ENCODE measurements at regions of chr11 and their contacts with region 1.

Region 1: DNA sequence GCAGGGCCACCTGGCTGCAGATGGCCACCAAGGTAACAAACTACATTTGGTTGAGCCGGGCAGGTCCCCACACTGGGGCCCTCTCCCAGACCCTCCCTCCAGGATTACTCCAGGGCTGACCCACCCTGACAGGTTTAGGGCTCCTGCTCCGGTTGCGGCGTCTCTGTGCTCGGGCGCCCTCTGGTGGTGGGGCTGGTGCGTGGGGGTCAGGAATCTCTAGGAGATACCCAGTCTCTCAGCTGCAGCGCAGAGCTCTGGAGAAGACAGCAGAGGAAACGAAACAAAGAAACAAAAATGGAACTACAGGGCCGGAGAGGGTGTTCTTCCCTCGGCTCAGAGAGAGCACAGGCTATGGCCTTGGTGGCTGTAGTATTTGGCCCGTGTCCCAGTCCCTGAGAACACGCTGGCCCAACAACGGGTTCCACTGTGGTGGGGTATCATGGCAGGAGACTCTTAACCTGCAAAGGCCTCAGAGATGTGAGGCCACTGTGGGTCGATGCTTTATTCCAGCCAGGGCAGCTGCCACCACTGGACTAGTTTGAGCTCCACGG is 2.4 kb downstream of the C11orf96 start:
- DNase-seq: peak; percentile 71 to 90 (median 75)
- ATAC-seq: peak; percentile 25 to 69 (median 31)
- H3K4me3 ChIP-seq: peak overlapping the region; percentile 62 to 90 (median 70)
- H3K27ac ChIP-seq: peak overlapping the region; percentile 85 to 92 (median 90)
- H3K4me1 ChIP-seq: peaks cover 0 to 41% (median 18%) of the 10 kb centered on the region in 12 donors
- H3K27me3 ChIP-seq: peaks cover 0 to 33% (median 0%) of the 10 kb centered on the region in 9 donors
- CTCF ChIP-seq: peak; percentile 71 to 88 (median 82)
- POLR2A ChIP-seq: no peak

Region 2: GRCh38 chr11:43895601-43896000 is 49.2 kb before region 1 on chr11:
- intact Hi-C with region 1: loop called in 8 of 10 experiments (anchors 1 to 10 kb)
- DNase-seq: no peak
- ATAC-seq: no peak
- H3K4me3 ChIP-seq: no peak overlapping the region
- H3K27ac ChIP-seq: no peak overlapping the region
- H3K4me1 ChIP-seq: no peaks in the 10 kb centered on the region
- H3K27me3 ChIP-seq: no peaks in the 10 kb centered on the region
- CTCF ChIP-seq: no peak
- POLR2A ChIP-seq: no peak

Region 3: GRCh38 chr11:43905813-43906241 is 39.0 kb before region 1 on chr11:
- intact Hi-C with region 1: loop called in 3 of 10 experiments (anchors 5 kb)
- DNase-seq: peak in 4 of 5 donors; percentile 38 to 71 (median 54)
- ATAC-seq: peak in 2 of 4 donors; percentile 55 to 61
- H3K4me3 ChIP-seq: no peak overlapping the region
- H3K27ac ChIP-seq: peak overlapping the region in 10 of 12 donors; percentile 43 to 68 (median 58)
- H3K4me1 ChIP-seq: peaks cover 0 to 30% (median 17%) of the 10 kb centered on the region in 12 donors
- H3K27me3 ChIP-seq: no peaks in the 10 kb centered on the region
- CTCF ChIP-seq: no peak
- POLR2A ChIP-seq: no peak

Region 4: DNA sequence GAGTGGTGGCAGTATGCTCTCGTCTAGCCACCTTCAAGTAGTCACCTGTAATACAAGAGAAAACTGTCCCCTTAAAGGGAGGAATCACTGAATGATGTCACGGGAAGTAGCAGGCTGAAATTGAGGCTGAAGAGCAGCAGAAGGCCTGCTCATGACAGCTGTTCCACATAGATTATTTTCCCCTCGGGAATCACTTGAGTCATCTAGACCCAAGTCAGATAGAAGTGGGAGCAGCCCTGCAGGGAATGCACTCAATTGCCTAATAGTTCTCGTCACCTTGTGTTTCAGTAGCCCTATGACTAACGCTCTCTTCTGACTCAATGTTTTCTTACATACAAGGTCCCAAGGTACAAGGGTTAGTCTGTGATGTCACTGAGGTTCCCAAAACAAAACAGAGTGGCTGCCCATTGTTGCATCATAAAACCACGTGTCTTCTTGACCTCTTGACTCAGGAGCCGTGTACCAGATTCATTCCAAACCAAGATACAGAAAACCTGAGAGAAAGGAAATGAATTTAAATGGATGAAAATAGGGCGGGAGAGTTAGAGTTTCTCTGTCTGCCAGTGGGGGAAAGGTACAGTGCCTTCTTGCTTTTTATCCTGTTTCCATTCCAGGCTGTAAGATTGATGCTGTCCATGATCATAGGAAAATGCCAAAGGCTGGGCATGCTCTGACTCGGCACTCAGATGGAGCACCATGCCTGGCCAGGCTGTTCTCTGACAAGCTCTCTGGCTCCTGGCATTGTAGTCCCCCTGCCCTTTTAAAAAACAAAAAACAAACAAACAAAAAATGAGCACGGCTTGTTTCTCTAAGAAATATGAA is 24.0 kb before region 1 on chr11:
- intact Hi-C with region 1: loop called in 1 of 10 experiments (anchors 2 kb)
- DNase-seq: peak in 4 of 5 donors; percentile 45 to 76 (median 64)
- ATAC-seq: peak; percentile 79 to 91 (median 82)
- H3K4me3 ChIP-seq: no peak overlapping the region
- H3K27ac ChIP-seq: peak overlapping the region; percentile 19 to 88 (median 74)
- H3K4me1 ChIP-seq: peaks cover 3 to 77% (median 32%) of the 10 kb centered on the region in 12 donors
- H3K27me3 ChIP-seq: no peaks in the 10 kb centered on the region
- CTCF ChIP-seq: no peak
- POLR2A ChIP-seq: no peak

Region 5: GRCh38 chr11:43955381-43956118 is 10.7 kb after region 1 on chr11:
- intact Hi-C with region 1: no loop called
- DNase-seq: no peak
- ATAC-seq: peak in 1 of 4 donors; percentile 41
- H3K4me3 ChIP-seq: no peak overlapping the region
- H3K27ac ChIP-seq: no peak overlapping the region
- H3K4me1 ChIP-seq: peaks cover 0 to 5% (median 0%) of the 10 kb centered on the region in 12 donors
- H3K27me3 ChIP-seq: no peaks in the 10 kb centered on the region
- CTCF ChIP-seq: no peak
- POLR2A ChIP-seq: no peak

Region 6: DNA sequence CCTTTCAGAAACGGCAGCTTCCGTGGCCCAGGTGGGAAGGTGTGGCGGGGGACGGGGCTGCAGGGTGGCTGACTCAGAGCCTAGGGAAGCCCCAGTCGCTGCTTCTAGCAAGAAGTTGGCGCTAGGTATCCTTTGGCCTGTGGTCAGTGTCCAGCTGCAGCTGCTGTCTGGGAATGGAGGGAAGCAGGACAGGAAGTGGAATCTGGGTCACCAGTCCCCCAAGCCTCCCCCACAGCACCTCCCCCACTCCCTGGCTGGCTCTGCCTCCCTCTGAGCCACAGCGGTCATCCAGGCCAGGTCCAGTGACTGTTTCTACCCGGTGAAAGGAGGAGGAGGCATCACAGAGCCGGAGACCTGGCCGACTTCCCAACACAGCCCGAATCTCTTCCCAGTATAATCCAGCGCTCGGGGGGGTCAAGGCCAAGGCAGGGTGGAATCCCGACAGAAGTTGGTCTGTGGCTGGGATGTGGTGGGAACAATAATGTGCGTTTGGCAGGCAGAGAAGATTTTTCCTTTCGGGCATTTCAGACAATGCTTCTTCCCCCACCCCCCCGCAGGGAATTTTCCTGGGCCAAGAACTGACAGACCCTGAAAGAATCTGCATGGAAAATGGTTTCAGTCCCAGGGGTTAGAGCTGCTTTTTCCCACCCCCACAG is 42.7 kb after region 1 on chr11:
- intact Hi-C with region 1: loop called in 8 of 10 experiments (anchors 2 to 5 kb)
- DNase-seq: peak; percentile 91 to 97 (median 94)
- ATAC-seq: peak; percentile 86 to 91 (median 90)
- H3K4me3 ChIP-seq: peak overlapping the region in 2 of 12 donors; percentile 2 to 16
- H3K27ac ChIP-seq: peak overlapping the region; percentile 46 to 91 (median 80)
- H3K4me1 ChIP-seq: peaks cover 15 to 72% (median 56%) of the 10 kb centered on the region in 12 donors
- H3K27me3 ChIP-seq: no peaks in the 10 kb centered on the region
- CTCF ChIP-seq: no peak
- POLR2A ChIP-seq: no peak

Region 7: GRCh38 chr11:44029977-44030911 is 85.4 kb after region 1 on chr11:
- intact Hi-C with region 1: loop called in 8 of 10 experiments (anchors 2 to 5 kb)
- DNase-seq: peak; percentile 63 to 74 (median 68)
- ATAC-seq: peak; percentile 72 to 88 (median 82)
- H3K4me3 ChIP-seq: no peak overlapping the region
- H3K27ac ChIP-seq: peak overlapping the region in 11 of 12 donors; percentile 66 to 92 (median 80)
- H3K4me1 ChIP-seq: peaks cover 2 to 46% (median 30%) of the 10 kb centered on the region in 12 donors
- H3K27me3 ChIP-seq: no peaks in the 10 kb centered on the region
- CTCF ChIP-seq: no peak
- POLR2A ChIP-seq: no peak

Region 8: GRCh38 chr11:44036811-44037657 is 92.2 kb after region 1 on chr11:
- intact Hi-C with region 1: loop called (anchors 2 to 5 kb)
- DNase-seq: peak; percentile 81 to 90 (median 88)
- ATAC-seq: peak; percentile 85 to 94 (median 92)
- H3K4me3 ChIP-seq: no peak overlapping the region
- H3K27ac ChIP-seq: peak overlapping the region in 2 of 12 donors; percentile 33 to 52
- H3K4me1 ChIP-seq: peaks cover 0 to 26% (median 16%) of the 10 kb centered on the region in 12 donors
- H3K27me3 ChIP-seq: no peaks in the 10 kb centered on the region
- CTCF ChIP-seq: peak; percentile 63 to 95 (median 88)
- POLR2A ChIP-seq: no peak

Region 9: GRCh38 chr11:44072757-44073658 is 128.2 kb after region 1 on chr11:
- intact Hi-C with region 1: no loop called
- DNase-seq: no peak
- ATAC-seq: no peak
- H3K4me3 ChIP-seq: no peak overlapping the region
- H3K27ac ChIP-seq: no peak overlapping the region
- H3K4me1 ChIP-seq: peaks cover 0 to 4% (median 0%) of the 10 kb centered on the region in 12 donors
- H3K27me3 ChIP-seq: no peaks in the 10 kb centered on the region
- CTCF ChIP-seq: no peak
- POLR2A ChIP-seq: no peak

Measured in heart left ventricle (tissue), 16 donors.